Breast epithelium (tissue), 4 donors: ENCODE measurements at regions of chr5 and their contacts with region 1.

Region 1: GRCh38 chr5:138287246-138287645 is 12.8 kb upstream of the GFRA3 start:
- DNase-seq: no peak
- H3K4me3 ChIP-seq: no peak overlapping the region
- H3K27ac ChIP-seq: no peak overlapping the region
- H3K4me1 ChIP-seq: no peaks in the 10 kb centered on the region
- H3K27me3 ChIP-seq: no peaks in the 10 kb centered on the region
- CTCF ChIP-seq: no peak
- POLR2A ChIP-seq: no peak

Region 2: DNA sequence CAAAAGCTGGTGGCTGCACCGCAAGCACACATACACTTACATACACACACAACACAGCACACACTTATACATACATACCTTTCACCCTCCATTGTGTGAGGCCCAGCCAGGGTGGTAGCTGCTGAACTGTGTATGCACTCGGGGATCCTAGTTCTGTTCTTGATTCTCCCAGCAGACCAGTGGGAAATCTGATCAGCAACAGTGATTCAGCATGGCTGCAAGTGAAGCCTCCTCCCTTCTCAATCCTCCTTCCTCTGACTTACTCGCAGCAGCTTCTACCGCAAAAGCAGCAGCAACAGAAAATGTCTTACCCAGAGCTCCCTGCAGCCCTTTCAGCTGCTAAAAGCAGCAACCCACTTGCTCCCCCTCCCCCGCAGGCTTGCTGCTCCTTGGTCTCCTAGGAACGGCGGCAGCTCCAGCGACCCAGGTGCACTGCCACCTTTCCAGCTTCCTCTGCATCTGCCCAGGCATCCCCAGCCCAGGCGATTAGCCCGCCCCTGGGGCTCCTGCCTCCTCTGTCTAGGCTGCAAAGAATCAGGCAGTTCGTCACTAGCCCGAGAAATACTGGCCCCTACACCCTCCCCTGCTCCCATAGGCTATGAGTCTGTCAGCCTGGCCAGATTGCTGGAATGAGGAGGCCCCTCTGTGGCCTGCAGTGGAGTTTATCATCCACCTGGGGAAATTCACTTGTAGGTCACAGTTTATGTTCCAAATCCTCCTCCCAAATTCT is 551.5 kb before region 1 on chr5 and contains the start of gene KLHL3:
- intact Hi-C with region 1: no loop called
- DNase-seq: no peak
- H3K4me3 ChIP-seq: peak within 1 kb of the TSS; percentile 36 to 62 (median 47)
- H3K27ac ChIP-seq: peak within 1 kb of the TSS; percentile 52 to 81
- H3K4me1 ChIP-seq: no peaks in the 10 kb centered on the region
- H3K27me3 ChIP-seq: no peaks in the 10 kb centered on the region
- CTCF ChIP-seq: peak in 1 of 3 donors; percentile 12
- POLR2A ChIP-seq: no peak
- total RNA-seq, gene KLHL3: 4.5 to 11.7 (median 4.9) TPM

Region 3: GRCh38 chr5:138223532-138223931 is 63.7 kb before region 1 on chr5:
- intact Hi-C with region 1: loop called (anchors 5 kb)
- DNase-seq: no peak
- H3K4me3 ChIP-seq: no peak overlapping the region
- H3K27ac ChIP-seq: no peak overlapping the region
- H3K4me1 ChIP-seq: no peaks in the 10 kb centered on the region
- H3K27me3 ChIP-seq: no peaks in the 10 kb centered on the region
- CTCF ChIP-seq: no peak
- POLR2A ChIP-seq: no peak

Region 4: GRCh38 chr5:138337685-138338410 is 50.6 kb after region 1 on chr5 and contains the start of gene FAM53C:
- intact Hi-C with region 1: no loop called
- DNase-seq: peak; percentile 89 to 96
- H3K4me3 ChIP-seq: peak within 1 kb of the TSS; percentile 70 to 98 (median 90)
- H3K27ac ChIP-seq: peak within 1 kb of the TSS; percentile 98 to 99
- H3K4me1 ChIP-seq: peaks cover 0 to 13% of the 10 kb centered on the region in 2 donors
- H3K27me3 ChIP-seq: no peaks in the 10 kb centered on the region
- CTCF ChIP-seq: peak in 2 of 3 donors; percentile 29 to 36
- POLR2A ChIP-seq: peak; percentile 98
- total RNA-seq, gene FAM53C: 16.6 to 31.0 (median 23.3) TPM